ENCODE measurements at regions of chr12 and their contacts with region 1.

Region 1: DNA sequence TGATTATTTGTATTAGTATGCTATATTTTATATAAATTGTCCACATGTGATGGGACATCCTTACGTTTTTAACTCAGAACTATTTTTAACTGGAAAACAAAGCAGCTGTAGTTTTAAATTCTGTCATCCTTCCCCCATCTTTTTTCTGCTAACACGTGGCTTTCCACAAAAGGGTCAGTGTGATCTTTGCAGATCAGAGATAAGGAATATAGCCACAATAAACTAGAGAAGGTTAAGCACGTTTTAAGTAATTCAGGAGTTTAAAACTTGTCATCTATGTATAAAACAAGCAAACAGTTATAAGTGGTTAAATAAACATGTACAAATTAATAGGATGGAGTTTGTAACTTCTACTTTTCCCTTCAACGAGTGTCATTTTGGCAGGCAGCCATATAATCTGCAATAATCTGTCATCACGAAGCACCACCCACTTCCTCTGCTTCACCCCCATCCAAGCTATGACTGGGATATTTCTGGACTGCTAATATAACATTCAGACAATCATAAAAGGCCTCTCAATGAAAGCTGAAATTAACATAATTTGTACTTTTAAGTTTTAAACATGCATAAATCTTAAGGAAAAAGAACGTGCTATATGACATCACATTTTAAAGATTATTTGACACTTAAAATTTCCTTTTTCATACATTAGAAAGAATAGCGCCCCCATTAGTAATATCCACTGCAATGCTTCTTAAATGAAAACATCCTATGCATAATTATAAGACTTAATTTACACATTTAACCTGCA is 15.3 kb downstream of the TAOK3 start:
- DNase-seq: peak; percentile 72
- ATAC-seq: peak; percentile 74
- H3K4me3 Mint-ChIP-seq: peak overlapping the region; percentile 83
- H3K27ac Mint-ChIP-seq: peak overlapping the region; percentile 95
- H3K4me1 Mint-ChIP-seq: peaks cover 49% of the 10 kb centered on the region
- H3K27me3 Mint-ChIP-seq: no peaks in the 10 kb centered on the region

Region 2: DNA sequence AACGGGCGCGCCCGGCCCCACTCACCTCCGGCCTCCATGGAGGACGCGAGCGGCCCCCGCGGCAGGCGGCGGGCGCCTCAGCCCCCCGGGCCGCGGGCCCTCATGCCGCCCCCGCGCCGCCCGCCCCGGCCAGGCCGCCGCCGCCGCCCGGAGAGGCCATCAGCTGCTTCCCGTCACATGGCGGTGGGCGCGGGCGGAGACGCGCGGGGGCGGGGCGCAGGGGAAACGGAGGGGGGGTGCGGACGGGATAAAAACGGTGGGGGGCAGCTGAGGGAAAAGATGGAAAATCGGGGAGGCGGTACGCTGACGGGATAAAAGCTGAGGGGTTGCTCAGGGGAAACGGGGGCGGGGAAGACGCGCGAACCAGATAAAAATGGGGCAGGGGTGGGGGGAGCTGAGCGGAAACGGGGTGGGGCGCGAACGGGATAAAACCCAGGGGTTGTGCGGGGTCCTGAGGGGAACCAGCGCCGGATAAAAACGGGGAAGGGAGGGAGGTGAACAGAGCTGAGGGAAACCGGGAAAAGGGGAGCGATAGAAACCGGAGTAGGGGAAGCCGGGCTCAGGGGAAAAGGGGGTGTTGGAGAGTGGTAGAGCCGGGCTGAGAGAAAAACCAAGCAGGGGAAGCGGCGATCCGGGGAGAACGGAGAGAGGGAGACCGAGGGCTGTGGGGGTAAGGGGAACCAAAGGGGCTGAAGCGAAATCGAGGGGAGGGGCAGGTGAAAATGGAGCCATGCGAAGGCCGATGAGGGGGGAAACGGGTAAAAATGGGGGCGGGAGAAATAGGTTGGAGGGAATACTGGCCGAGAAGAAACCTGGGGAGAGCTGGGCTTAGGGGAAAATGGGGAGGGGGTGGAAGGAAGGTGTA is 296.2 kb before region 1 on chr12 and contains the start of gene WSB2:
- CTCF ChIA-PET with region 1: no interaction called
- POLR2A ChIA-PET with region 1: no interaction called
- intact Hi-C with region 1: loop called in 1 of 2 experiments (anchors 5 kb)
- DNase-seq: peak; percentile 73
- ATAC-seq: peak; percentile 8
- H3K4me3 Mint-ChIP-seq: peak within 1 kb of the TSS; percentile 88
- H3K27ac Mint-ChIP-seq: peak within 1 kb of the TSS; percentile 97
- H3K4me1 Mint-ChIP-seq: peaks cover 47% of the 10 kb centered on the region
- H3K27me3 Mint-ChIP-seq: peaks cover 2% of the 10 kb centered on the region
- total RNA-seq, gene WSB2: 57.7 to 58.2 TPM

Region 3: DNA sequence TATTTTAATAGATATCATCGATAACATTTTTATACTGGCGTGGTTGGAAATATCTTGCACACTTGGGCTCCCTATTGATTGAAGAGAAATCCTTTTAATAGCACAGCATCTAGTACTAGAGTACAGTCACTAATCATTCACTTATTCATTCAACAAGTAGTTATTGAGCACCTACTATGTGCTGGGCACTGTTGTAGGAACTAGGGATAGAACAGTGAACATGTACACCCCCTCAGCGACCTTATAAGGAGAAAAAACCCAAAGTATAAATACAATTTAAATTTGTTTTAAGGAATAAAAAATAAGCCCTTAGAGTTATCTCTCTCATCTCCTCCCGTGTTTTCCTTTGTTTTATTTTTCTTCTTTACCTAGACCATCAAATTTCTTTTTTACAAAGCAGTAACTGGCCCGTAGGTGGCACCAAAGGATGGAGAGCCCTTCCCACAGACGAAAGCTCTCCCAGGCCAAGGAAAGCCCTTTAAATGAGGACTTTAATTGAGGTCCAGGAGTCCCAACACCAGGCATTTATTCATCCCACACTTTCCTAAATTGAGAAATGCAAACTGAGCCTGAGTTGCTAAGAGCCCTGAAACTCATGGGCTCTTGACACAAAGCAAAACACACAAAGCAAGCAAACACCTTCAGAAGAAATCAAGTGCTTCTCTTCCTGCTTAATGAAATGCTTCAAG is 192.5 kb before region 1 on chr12:
- CTCF ChIA-PET with region 1: interaction called, 3 read pairs
- POLR2A ChIA-PET with region 1: no interaction called
- intact Hi-C with region 1: loop called in 1 of 2 experiments (anchors 1 kb)
- DNase-seq: peak; percentile 49
- ATAC-seq: no peak
- H3K4me3 Mint-ChIP-seq: no peak overlapping the region
- H3K27ac Mint-ChIP-seq: no peak overlapping the region
- H3K4me1 Mint-ChIP-seq: peaks cover 37% of the 10 kb centered on the region
- H3K27me3 Mint-ChIP-seq: no peaks in the 10 kb centered on the region

Region 4: GRCh38 chr12:118183705-118184104 is 173.7 kb before region 1 on chr12:
- CTCF ChIA-PET with region 1: interaction called, 12 read pairs
- POLR2A ChIA-PET with region 1: no interaction called
- intact Hi-C with region 1: loop called in 1 of 2 experiments (anchors 5 kb)
- DNase-seq: no peak
- ATAC-seq: no peak
- H3K4me3 Mint-ChIP-seq: no peak overlapping the region
- H3K27ac Mint-ChIP-seq: no peak overlapping the region
- H3K4me1 Mint-ChIP-seq: peaks cover 21% of the 10 kb centered on the region
- H3K27me3 Mint-ChIP-seq: no peaks in the 10 kb centered on the region

Region 5: DNA sequence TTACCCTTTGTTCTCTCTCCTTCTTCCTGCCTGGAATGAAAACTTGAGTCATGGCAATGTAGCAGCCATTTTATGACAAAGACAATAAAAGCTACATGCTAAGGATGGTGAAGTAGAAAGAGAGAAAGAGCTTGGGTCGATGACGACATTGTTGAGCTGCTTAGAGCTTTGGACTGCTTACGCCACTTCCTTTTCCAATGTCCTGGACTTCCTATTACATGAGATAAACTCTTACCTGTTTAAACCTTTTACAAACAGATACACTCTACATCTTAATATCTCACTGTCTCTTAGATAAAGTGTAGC is 151.4 kb before region 1 on chr12:
- CTCF ChIA-PET with region 1: no interaction called
- POLR2A ChIA-PET with region 1: no interaction called
- intact Hi-C with region 1: no loop called
- DNase-seq: no peak
- ATAC-seq: peak; percentile 16
- H3K4me3 Mint-ChIP-seq: no peak overlapping the region
- H3K27ac Mint-ChIP-seq: no peak overlapping the region
- H3K4me1 Mint-ChIP-seq: peaks cover 5% of the 10 kb centered on the region
- H3K27me3 Mint-ChIP-seq: no peaks in the 10 kb centered on the region

Region 6: GRCh38 chr12:118307069-118307954 is 50.1 kb before region 1 on chr12:
- CTCF ChIA-PET with region 1: interaction called, 9 read pairs
- POLR2A ChIA-PET with region 1: interaction called, 3 read pairs
- intact Hi-C with region 1: loop called (anchors 1 to 2 kb)
- DNase-seq: peak; percentile 71
- ATAC-seq: peak; percentile 80
- H3K4me3 Mint-ChIP-seq: peak overlapping the region; percentile 66
- H3K27ac Mint-ChIP-seq: peak overlapping the region; percentile 92
- H3K4me1 Mint-ChIP-seq: peaks cover 43% of the 10 kb centered on the region
- H3K27me3 Mint-ChIP-seq: no peaks in the 10 kb centered on the region

Region 7: DNA sequence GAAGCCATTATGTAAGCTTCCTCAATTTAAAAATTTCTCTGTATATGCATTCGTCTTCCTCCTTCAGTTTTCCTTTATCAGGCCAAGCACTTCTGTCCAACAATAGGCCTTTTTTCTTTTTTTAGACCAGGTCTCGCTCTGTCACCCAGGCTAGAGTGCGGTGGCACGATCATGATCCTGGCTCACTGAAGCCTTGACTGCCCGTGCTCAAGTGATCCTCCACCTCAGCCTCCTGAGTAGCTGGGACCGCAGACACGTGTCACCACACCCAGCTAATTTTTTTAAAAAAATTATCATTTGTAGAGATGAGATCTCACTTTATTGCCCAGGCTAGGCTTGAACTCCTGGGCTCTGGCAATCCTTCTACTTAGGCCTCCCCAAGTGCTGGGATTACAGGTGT is 10.5 kb before region 1 on chr12:
- CTCF ChIA-PET with region 1: interaction called, 24 read pairs
- POLR2A ChIA-PET with region 1: interaction called, 5 read pairs
- intact Hi-C with region 1: no loop called
- DNase-seq: no peak
- ATAC-seq: no peak
- H3K4me3 Mint-ChIP-seq: no peak overlapping the region
- H3K27ac Mint-ChIP-seq: no peak overlapping the region
- H3K4me1 Mint-ChIP-seq: peaks cover 41% of the 10 kb centered on the region
- H3K27me3 Mint-ChIP-seq: no peaks in the 10 kb centered on the region

Region 8: DNA sequence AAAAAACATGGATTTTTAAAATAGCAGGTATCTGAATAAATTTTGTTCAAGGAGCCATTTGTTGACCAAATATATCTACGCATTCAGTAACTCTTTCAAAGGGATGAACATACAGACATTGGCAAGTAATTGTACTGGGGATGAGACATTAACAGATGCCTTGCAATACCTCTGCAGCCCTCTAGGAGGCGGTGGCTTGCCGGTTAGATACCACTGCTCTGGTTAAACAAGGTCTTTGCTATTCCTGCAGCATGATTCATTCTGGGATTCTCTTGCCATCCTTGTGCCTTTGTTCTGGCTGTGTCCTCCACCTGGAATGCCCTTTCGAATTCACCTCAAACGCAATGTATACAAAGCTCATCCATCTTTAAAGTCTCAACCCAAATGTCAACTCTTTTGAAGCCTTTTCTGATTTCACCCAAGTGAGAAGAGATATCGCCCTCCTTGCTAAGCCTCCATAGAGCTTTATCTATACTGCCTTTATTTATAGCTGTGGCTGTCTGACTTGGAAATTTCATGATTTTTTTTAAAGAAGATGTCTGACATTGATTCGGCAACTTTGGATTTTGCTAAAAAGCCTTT is 492.9 kb after region 1 on chr12:
- CTCF ChIA-PET with region 1: no interaction called
- POLR2A ChIA-PET with region 1: no interaction called
- intact Hi-C with region 1: no loop called
- DNase-seq: peak; percentile 55
- ATAC-seq: no peak
- H3K4me3 Mint-ChIP-seq: no peak overlapping the region
- H3K27ac Mint-ChIP-seq: no peak overlapping the region
- H3K4me1 Mint-ChIP-seq: no peaks in the 10 kb centered on the region
- H3K27me3 Mint-ChIP-seq: peaks cover 6% of the 10 kb centered on the region

Measured in activated CD4-positive, alpha-beta T cell treated with anti-CD3 and anti-CD28 coated beads for 36 hours (primary cell).